ENCODE measurements at regions of chr21 and their contacts with region 1.

Region 1: GRCh38 chr21:41425954-41426675 is at the start of gene MX1:
- DNase-seq: peak; percentile 89
- H3K4me3 Mint-ChIP-seq: peak within 1 kb of the TSS; percentile 93
- H3K27ac Mint-ChIP-seq: peak within 1 kb of the TSS; percentile 92
- H3K4me1 Mint-ChIP-seq: peaks cover 63% of the 10 kb centered on the region
- H3K27me3 Mint-ChIP-seq: no peaks in the 10 kb centered on the region
- total RNA-seq, gene MX1: 26.7 and 31.0 TPM in 2 replicates

Region 2: GRCh38 chr21:41361786-41362604 is 64.1 kb before region 1 on chr21 and contains the start of gene MX2:
- intact Hi-C with region 1: loop called (anchors 2 kb)
- DNase-seq: peak; percentile 81
- H3K4me3 Mint-ChIP-seq: peak within 1 kb of the TSS; percentile 80
- H3K27ac Mint-ChIP-seq: peak within 1 kb of the TSS; percentile 89
- H3K4me1 Mint-ChIP-seq: peaks cover 36% of the 10 kb centered on the region
- H3K27me3 Mint-ChIP-seq: peaks cover 5% of the 10 kb centered on the region
- total RNA-seq, gene MX2: 5.3 and 6.1 TPM in 2 replicates